ENCODE measurements at regions of chr10 and their contacts with region 1.

Region 1: DNA sequence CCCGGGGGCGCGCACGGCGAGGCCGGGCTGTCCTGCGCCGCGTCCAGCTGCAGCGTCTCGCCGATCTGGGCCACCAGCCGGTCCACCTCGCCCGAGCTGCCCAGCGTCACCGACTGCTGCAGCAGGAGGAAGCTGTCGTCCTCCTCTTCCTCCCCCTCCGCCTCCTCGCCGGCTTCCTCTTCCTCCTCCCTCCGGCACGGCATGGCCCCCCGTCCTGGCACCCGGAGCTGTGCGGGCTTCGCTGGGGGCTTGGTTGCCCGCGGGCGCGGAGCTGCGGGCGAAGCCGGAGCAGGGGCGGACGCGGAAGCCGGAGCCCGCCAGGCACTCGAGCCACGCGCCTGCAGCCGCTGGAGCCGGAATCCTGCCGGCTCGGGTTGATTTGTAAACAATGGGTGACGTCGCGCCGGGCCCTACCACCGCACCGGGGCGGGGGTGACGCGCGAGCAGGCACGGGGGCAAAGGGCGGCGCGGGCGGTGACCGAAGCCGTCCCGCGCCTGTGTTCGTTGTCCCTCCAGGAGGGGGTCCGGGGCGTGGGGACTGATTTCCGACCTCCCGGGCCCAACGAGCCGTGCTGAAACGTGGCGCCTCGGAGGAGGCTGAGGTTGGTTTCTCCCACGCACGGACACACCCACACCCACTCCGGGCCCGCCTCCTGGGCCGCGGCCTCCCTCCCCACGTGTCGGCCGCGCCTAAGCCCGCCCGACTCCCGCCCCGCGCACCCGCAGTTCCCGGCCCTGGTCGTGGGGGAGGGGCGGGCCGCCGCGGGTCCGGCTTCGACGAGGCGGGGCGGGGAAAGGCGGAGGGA is at the start of gene FRAT2:
- DNase-seq: peak; percentile 96
- CTCF ChIP-seq: no peak

Region 2: GRCh38 chr10:97307866-97308780 is 26.4 kb before region 1 on chr10:
- CTCF ChIA-PET with region 1: no interaction called
- POLR2A ChIA-PET with region 1: no interaction called
- DNase-seq: no peak
- CTCF ChIP-seq: no peak

Region 3: GRCh38 chr10:97318772-97319651 is 15.6 kb before region 1 on chr10 and contains the start of gene FRAT1:
- CTCF ChIA-PET with region 1: interaction called, 24 read pairs
- POLR2A ChIA-PET with region 1: interaction called, 3 read pairs
- DNase-seq: peak; percentile 83
- CTCF ChIP-seq: no peak